Dorsolateral prefrontal cortex (tissue), 120 donors: ENCODE measurements at regions of chr11 and their contacts with region 1.

Region 1: GRCh38 chr11:32326522-32326921 is 108.8 kb downstream of the WT1 start:
- DNase-seq: no peak
- H3K4me3 ChIP-seq: no peak overlapping the region
- H3K27ac ChIP-seq: no peak overlapping the region
- H3K27me3 ChIP-seq: peaks cover 0 to 25% (median 0%) of the 10 kb centered on the region in 45 donors
- CTCF ChIP-seq: no peak

Region 2: GRCh38 chr11:31995525-31996094 is 330.9 kb before region 1 on chr11:
- intact Hi-C with region 1: no loop called
- DNase-seq: peak in 1 of 10 donors; percentile 54
- H3K4me3 ChIP-seq: peak overlapping the region in 16 of 59 donors; percentile 1 to 37 (median 16)
- H3K27ac ChIP-seq: no peak overlapping the region
- H3K27me3 ChIP-seq: peaks cover 0 to 36% (median 4%) of the 10 kb centered on the region in 45 donors
- CTCF ChIP-seq: no peak

Region 3: GRCh38 chr11:32792948-32793475 is 466.5 kb after region 1 on chr11:
- intact Hi-C with region 1: loop called in 1 of 2 experiments (anchors 10 kb)
- DNase-seq: peak in 8 of 10 donors; percentile 27 to 72 (median 54)
- H3K4me3 ChIP-seq: peak overlapping the region in 51 of 59 donors; percentile 1 to 61 (median 39)
- H3K27ac ChIP-seq: no peak overlapping the region
- H3K27me3 ChIP-seq: peaks cover 0 to 7% (median 0%) of the 10 kb centered on the region in 45 donors
- CTCF ChIP-seq: peak; percentile 60 to 91 (median 76)